Endothelial cell of umbilical vein (primary cell): ENCODE measurements at regions of chr9 and their contacts with region 1.

Region 1: DNA sequence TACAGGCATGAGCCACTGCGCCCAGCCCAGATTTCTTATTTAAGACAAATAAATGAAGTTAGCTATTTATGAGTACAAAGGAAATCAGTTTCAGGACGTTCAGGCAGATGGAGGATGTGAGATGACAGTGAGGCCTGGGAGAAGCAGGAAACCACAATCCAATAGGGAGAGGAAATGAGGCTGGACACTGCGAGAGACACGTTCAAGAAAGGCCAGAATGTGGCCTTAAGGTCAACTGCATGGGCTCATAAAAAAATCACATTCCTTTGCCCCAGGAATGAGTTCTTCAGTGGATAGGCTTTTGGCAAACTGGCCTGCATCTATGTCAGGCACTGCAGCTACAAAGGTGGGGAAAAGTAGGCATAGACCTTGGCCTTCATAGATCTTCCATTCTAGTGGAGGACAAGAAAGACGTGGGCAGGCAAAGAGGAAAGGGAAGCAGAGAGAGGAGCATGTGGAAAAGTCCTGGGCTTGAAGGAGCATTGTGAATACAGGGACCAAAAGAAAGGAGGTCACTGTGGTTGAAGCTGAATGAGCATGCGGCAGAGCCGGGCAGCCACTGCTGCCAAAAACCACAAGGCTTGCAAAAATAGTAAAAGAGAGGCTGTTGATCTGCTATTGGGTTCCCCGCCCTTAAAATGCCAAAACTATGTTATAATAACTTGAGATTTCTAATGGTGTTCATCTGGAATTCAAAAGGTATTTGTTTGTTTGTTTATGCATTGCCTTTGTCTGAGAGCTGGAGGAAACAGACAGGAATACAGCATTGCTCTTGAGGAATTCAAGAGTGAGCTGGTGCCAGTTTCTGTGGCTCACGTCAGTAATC is 133.0 kb downstream of the GNA14 start:
- DNase-seq: peak; percentile 94
- H3K4me3 ChIP-seq: no peak overlapping the region
- H3K27ac ChIP-seq: peak overlapping the region; percentile 82
- H3K4me1 ChIP-seq: peaks cover 31% of the 10 kb centered on the region
- H3K27me3 ChIP-seq: no peaks in the 10 kb centered on the region
- CTCF ChIP-seq: no peak
- POLR2A ChIP-seq: peak; percentile 57

Region 2: GRCh38 chr9:77384406-77384805 is 130.7 kb before region 1 on chr9:
- CTCF ChIA-PET with region 1: no interaction called
- POLR2A ChIA-PET with region 1: no interaction called
- dilution Hi-C with region 1: no loop called
- intact Hi-C with region 1: no loop called
- DNase-seq: peak; percentile 5
- H3K4me3 ChIP-seq: no peak overlapping the region
- H3K27ac ChIP-seq: no peak overlapping the region
- H3K4me1 ChIP-seq: no peaks in the 10 kb centered on the region
- H3K27me3 ChIP-seq: no peaks in the 10 kb centered on the region
- CTCF ChIP-seq: no peak
- POLR2A ChIP-seq: no peak

Region 3: GRCh38 chr9:77531400-77531799 is 16.3 kb after region 1 on chr9:
- CTCF ChIA-PET with region 1: no interaction called
- POLR2A ChIA-PET with region 1: no interaction called
- dilution Hi-C with region 1: no loop called
- intact Hi-C with region 1: no loop called
- DNase-seq: no peak
- H3K4me3 ChIP-seq: no peak overlapping the region
- H3K27ac ChIP-seq: no peak overlapping the region
- H3K4me1 ChIP-seq: no peaks in the 10 kb centered on the region
- H3K27me3 ChIP-seq: no peaks in the 10 kb centered on the region
- CTCF ChIP-seq: no peak
- POLR2A ChIP-seq: no peak

Region 4: DNA sequence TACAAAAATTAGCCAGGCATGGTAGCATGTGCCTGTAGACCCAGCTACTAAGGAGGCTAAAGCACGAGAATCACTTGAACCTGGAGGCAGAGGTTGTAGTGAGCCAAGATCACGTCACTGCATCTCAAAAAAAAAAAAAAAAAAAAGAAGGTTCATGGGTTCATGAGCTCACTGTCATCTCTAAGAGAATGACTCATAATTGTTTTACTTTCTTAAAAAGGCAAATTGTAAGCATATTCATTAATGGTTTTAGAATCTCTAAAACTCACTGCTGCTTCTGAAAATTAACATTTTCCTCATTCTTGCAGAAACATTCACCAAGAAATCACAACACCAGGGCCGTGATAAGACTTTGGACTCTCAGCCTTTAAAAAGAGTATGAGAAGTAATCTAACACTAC is 29.4 kb after region 1 on chr9:
- CTCF ChIA-PET with region 1: no interaction called
- POLR2A ChIA-PET with region 1: no interaction called
- dilution Hi-C with region 1: no loop called
- intact Hi-C with region 1: no loop called
- DNase-seq: no peak
- H3K4me3 ChIP-seq: no peak overlapping the region
- H3K27ac ChIP-seq: no peak overlapping the region
- H3K4me1 ChIP-seq: no peaks in the 10 kb centered on the region
- H3K27me3 ChIP-seq: no peaks in the 10 kb centered on the region
- CTCF ChIP-seq: no peak
- POLR2A ChIP-seq: no peak

Region 5: GRCh38 chr9:77588271-77588937 is 73.3 kb after region 1 on chr9:
- CTCF ChIA-PET with region 1: interaction called, 3 read pairs
- POLR2A ChIA-PET with region 1: no interaction called
- dilution Hi-C with region 1: no loop called
- intact Hi-C with region 1: loop called (anchors 1 kb)
- DNase-seq: peak; percentile 92
- H3K4me3 ChIP-seq: peak overlapping the region in 1 of 3 experiments; percentile 24
- H3K27ac ChIP-seq: peak overlapping the region; percentile 93
- H3K4me1 ChIP-seq: peaks cover 35% of the 10 kb centered on the region
- H3K27me3 ChIP-seq: no peaks in the 10 kb centered on the region
- CTCF ChIP-seq: no peak
- POLR2A ChIP-seq: no peak

Region 6: DNA sequence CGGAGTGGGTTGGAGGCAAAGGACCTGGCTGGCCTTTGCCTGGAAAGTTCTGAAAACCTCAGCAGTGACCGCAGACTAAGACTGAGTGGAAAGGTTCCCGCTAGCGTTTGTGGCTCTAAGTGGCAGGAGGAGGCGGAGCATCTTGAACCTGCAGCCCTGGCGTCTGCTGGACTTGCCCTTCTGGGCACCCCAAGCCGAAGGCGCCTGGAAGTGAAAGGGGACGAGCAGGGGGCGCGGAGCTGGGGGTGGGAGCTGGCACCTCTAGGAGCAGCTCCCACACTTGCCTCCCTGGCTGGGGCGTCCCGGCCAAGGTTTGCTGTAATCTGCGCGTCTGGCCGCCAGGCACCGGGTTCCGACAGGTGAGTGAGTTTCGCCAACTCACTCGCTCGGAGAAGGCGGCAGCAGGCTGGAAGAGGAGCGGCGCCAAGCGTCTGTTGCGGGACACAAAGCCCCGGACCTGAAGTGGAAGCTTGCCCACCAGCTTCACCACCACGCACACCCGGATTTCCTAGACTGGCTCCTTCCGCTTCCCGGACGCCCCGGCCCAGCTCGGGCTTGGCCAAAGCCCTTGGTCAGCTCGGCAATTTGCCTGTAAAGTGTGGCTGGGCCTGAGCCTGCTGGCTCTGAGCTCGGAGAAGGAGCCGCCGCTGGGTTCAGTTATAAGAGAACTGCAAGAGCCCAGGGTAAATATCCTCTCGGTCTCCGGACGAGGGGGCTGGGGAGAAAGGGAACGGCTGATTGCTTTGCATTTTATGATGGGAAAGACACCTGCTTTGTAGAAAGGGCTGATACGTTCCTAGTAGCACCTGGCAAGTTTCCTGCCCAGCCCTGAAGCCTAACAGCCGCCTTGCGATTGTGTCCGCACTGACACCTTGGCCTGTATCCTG is 133.4 kb after region 1 on chr9 and contains the start of gene GNA14:
- CTCF ChIA-PET with region 1: interaction called, 9 read pairs
- POLR2A ChIA-PET with region 1: no interaction called
- dilution Hi-C with region 1: no loop called
- intact Hi-C with region 1: loop called (anchors 1 kb)
- DNase-seq: peak; percentile 51
- H3K4me3 ChIP-seq: peak within 1 kb of the TSS; percentile 35 to 69 (median 54)
- H3K27ac ChIP-seq: no peak within 1 kb of the TSS
- H3K4me1 ChIP-seq: peaks cover 18% of the 10 kb centered on the region
- H3K27me3 ChIP-seq: peaks cover 1 to 6% of the 10 kb centered on the region in 2 experiments
- CTCF ChIP-seq: no peak
- POLR2A ChIP-seq: no peak
- total RNA-seq, gene GNA14: 3.0 and 3.3 TPM in 2 replicates

Region 7: GRCh38 chr9:77712533-77713130 is 197.5 kb after region 1 on chr9:
- CTCF ChIA-PET with region 1: interaction called, 5 read pairs
- POLR2A ChIA-PET with region 1: no interaction called
- dilution Hi-C with region 1: no loop called
- intact Hi-C with region 1: loop called (anchors 1 kb)
- DNase-seq: peak; percentile 81
- H3K4me3 ChIP-seq: peak overlapping the region in 1 of 3 experiments; percentile 19
- H3K27ac ChIP-seq: peak overlapping the region; percentile 97
- H3K4me1 ChIP-seq: peaks cover 69% of the 10 kb centered on the region
- H3K27me3 ChIP-seq: no peaks in the 10 kb centered on the region
- CTCF ChIP-seq: no peak
- POLR2A ChIP-seq: no peak

Region 8: DNA sequence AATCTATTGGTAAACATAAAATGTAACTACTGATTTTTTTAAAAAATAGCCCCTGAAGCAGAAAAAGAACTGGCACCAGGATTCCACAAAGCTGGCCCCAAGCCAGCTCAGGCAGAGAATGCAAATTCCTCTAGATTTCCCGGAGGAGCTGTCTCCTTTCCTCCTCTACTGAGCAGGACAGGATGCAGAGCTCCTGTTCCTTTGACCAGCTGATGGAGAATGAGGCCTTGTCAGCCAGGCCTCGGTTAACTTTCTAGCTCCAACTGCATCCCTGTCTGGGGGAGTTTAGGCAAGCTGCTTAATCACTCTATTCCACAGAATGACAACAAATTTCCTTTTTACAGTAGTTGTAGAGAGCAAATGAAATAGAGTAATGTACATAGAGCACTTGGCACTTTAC is 361.0 kb after region 1 on chr9:
- CTCF ChIA-PET with region 1: no interaction called
- POLR2A ChIA-PET with region 1: no interaction called
- dilution Hi-C with region 1: no loop called
- intact Hi-C with region 1: no loop called
- DNase-seq: peak; percentile 49
- H3K4me3 ChIP-seq: no peak overlapping the region
- H3K27ac ChIP-seq: no peak overlapping the region
- H3K4me1 ChIP-seq: peaks cover 12% of the 10 kb centered on the region
- H3K27me3 ChIP-seq: no peaks in the 10 kb centered on the region
- CTCF ChIP-seq: no peak
- POLR2A ChIP-seq: no peak

Region 9: DNA sequence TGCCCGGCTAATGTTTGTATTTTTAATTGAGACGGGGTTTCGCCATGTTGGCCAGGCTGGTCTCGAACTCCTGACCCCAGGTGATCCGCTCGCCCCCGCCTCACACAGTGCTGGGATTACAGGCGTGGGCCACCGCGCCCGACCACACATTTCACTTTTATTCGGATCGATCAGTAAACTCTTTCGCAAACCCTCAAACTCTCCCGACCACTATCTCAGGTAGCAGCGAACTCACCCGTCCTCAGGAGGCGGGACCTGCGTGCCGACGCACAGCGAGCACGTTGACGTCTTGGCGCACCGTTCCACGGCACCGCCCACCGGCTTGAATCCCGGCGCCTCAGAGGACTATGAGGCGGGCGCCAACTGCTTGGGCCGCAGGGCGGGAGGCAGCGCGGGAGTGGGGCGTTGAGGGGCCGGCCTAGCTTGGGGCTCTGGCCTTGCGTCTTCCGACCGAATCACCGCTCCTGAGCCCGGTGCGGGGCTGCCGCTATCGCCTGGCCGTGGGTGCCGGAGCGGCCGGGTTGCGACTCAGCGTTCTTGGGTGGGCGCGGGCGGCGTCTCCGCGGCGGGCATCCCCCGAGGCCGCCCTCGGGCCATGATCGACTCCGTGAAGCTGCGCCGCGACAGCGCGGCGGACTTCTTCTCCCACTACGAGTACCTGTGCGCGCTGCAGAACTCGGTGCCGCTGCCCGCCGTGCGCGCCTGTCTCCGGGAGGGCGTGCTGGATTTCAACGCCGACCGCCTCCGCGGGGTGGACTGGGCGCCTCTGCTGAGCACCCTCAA is 720.8 kb after region 1 on chr9 and contains the start of gene CEP78:
- CTCF ChIA-PET with region 1: no interaction called
- POLR2A ChIA-PET with region 1: no interaction called
- dilution Hi-C with region 1: no loop called
- intact Hi-C with region 1: loop called (anchors 10 kb)
- DNase-seq: peak; percentile 95
- H3K4me3 ChIP-seq: peak within 1 kb of the TSS; percentile 72 to 78 (median 76)
- H3K27ac ChIP-seq: peak within 1 kb of the TSS; percentile 55
- H3K4me1 ChIP-seq: peaks cover 6% of the 10 kb centered on the region
- H3K27me3 ChIP-seq: no peaks in the 10 kb centered on the region
- CTCF ChIP-seq: no peak
- POLR2A ChIP-seq: peak; percentile 76
- total RNA-seq, gene CEP78: 30.2 and 35.9 TPM in 2 replicates